Activated CD8-positive, alpha-beta T cell treated with anti-CD3 and anti-CD28 coated beads for 36 hours (primary cell): ENCODE measurements at regions of chr16 and their contacts with region 1.

Region 1: DNA sequence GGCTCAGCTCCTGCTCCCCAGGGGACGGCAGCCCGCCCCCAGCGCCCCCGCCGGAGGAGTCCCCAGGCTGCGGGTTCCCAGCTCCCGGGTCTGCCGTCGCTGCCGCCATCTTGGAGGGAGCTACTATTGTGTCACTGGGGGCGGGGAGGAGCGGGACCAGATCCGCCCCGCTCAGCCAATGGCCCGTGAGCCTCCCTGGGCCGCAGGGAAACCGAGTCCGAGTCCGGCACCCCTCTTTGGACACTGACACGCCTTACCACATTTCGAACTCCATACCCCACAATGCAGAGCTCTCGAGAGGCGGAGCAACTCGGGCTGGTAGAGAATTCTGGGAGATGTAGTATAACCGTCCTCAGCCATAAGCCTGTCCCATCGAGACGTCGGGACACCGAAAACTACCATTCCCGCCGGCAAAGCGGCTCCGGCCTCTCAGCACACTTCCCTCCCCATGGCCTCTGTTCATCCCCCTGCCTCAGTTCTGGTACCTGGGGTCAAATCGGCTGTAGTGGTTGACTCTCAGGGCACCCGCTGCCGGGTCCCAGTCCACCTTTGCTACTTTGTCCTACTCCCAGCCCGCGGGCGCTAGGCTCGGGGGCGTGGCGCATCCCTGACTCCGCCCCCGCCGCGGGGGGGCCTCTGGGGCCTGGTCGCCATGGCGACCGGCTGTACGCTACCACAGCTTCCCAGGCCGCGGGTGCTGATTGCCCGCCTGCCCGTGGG is at the starts of genes RANBP10 and TSNAXIP1:
- DNase-seq: peak; percentile 98
- ATAC-seq: peak; percentile 96
- H3K4me3 Mint-ChIP-seq: peak within 1 kb of the TSS; percentile 94
- H3K27ac Mint-ChIP-seq: peak within 1 kb of the TSS; percentile 97
- H3K4me1 Mint-ChIP-seq: peaks cover 38% of the 10 kb centered on the region
- H3K27me3 Mint-ChIP-seq: no peaks in the 10 kb centered on the region
- CTCF ChIP-seq: no peak
- total RNA-seq, gene RANBP10: 15.9 to 18.9 TPM
- total RNA-seq, gene TSNAXIP1: 0.40 to 0.47 TPM

Region 2: GRCh38 chr16:67833418-67834241 is 27.0 kb after region 1 on chr16:
- CTCF ChIA-PET with region 1: interaction called, 4 read pairs
- POLR2A ChIA-PET with region 1: interaction called, 18 read pairs
- intact Hi-C with region 1: no loop called
- DNase-seq: peak; percentile 98
- ATAC-seq: peak; percentile 100
- H3K4me3 Mint-ChIP-seq: peak overlapping the region; percentile 89
- H3K27ac Mint-ChIP-seq: peak overlapping the region; percentile 76
- H3K4me1 Mint-ChIP-seq: peaks cover 12% of the 10 kb centered on the region
- H3K27me3 Mint-ChIP-seq: no peaks in the 10 kb centered on the region
- CTCF ChIP-seq: no peak